GM12878 (cell line): ENCODE measurements at regions of chr14 and their contacts with region 1.

Region 1: DNA sequence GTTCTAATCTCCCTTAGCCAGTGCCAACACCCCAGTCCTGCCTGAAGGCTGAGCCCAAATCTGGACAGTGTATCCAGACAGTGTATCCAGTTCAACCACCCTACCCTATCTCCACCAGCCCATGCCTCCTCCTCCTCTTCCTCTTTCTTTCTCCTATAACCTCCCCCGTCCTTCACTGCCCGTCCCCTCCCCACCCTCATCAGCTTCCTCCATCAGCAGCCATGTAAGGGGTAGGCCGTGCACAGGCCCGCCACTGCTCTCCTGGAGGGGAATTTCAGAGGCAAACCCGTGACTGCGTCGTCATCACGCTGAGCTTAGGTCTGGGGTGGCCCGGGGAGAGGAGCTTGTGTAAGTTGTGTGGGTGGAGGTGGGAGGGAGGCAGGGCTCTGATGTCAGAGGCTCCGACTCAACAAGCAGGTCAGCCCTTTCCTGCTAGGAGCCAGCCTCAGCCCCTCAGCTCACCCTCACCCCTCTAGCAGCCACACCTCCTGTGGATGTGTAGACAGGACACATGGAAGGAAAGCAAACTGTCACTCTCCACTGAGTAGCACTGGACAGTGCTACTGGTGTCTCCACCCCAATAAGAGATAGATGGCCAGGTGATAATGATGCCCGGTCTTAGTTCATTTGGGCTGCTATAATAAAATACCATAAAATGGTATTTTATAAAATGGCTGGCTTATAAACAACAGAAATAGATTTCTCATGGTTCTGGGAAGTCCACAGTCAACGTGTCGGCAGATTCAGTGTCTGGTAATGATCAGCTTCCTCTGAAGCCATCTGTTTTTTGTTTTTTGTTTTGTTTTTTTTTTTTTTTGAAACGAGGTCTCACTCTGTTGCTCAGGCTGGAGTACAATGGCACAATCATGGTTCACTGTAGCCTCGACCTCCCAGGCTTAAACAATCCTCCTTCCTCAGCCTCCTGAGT is 50.5 kb downstream of the IRF2BPL start:
- DNase-seq: peak; percentile 81
- ATAC-seq: peak; percentile 98
- H3K4me3 ChIP-seq: no peak overlapping the region
- H3K27ac ChIP-seq: peak overlapping the region; percentile 65
- H3K4me1 ChIP-seq: peaks cover 20% of the 10 kb centered on the region
- H3K27me3 ChIP-seq: no peaks in the 10 kb centered on the region
- CTCF ChIP-seq: no peak
- EP300 ChIP-seq: peak; percentile 64 to 75; a peak in 2 of 4 replicates
- POLR2A ChIP-seq: peak; percentile 72
- RAD21 ChIP-seq: 0 out of 2 replicates have a peak, but pooled peaks have one; percentile 20

Region 2: DNA sequence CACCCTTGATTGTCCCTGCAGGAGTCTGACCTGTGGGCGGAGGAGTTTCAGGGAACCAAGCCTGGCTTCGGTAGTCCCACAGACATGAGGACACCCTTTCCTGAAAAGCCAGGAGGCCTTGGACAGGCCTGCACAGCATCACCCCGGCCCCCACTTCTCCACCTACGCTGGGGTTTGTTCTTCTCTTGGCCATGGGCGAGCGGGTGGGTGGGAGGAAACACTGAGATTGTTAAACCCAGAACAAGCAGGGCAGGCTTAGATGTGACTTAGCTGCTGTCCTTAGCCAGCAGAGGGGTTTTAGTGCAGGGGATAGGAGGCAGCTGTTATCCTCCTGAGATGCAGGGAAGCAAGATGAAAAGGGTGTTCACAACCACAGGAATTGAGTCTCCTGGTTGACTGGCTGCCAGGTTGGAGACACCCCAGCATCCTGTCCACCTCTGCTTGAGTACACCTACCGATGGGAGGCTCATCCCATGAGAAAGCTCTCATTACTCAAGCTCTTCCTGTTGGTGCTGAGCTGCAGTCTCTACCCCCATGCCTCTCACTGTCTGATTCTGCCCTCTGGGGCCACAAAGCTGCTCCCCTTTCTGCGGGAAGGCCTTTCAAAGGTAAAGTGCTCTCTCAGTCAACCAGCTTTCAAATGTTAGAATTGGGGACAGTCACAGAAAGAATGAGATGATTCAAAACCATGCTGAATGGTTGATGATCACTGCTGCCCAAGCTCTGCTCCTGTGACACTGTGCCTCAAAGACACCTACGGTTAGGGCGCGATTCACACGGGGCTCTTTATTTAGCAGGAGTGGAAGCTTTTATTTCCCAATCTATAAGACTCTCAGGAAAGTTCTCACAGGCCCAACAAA is 35.9 kb before region 1 on chr14:
- CTCF ChIA-PET with region 1: interaction called, 4 read pairs
- POLR2A ChIA-PET with region 1: interaction called, 10 read pairs
- RAD21 ChIA-PET with region 1: interaction called, 10 read pairs
- SMC1A ChIA-PET with region 1: interaction called, 7 read pairs
- in situ Hi-C with region 1: no loop called
- intact Hi-C with region 1: no loop called
- DNase-seq: peak; percentile 72
- ATAC-seq: peak; percentile 29
- H3K4me3 ChIP-seq: no peak overlapping the region
- H3K27ac ChIP-seq: no peak overlapping the region
- H3K4me1 ChIP-seq: peaks cover 21% of the 10 kb centered on the region
- H3K27me3 ChIP-seq: no peaks in the 10 kb centered on the region
- CTCF ChIP-seq: no peak; a peak in 1 of 6 replicates
- EP300 ChIP-seq: no peak
- POLR2A ChIP-seq: no peak
- RAD21 ChIP-seq: no peak

Region 3: GRCh38 chr14:76947078-76947837 is 30.8 kb before region 1 on chr14:
- CTCF ChIA-PET with region 1: interaction called, 4 read pairs
- POLR2A ChIA-PET with region 1: interaction called, 10 read pairs
- RAD21 ChIA-PET with region 1: interaction called, 10 read pairs
- SMC1A ChIA-PET with region 1: interaction called, 7 read pairs
- in situ Hi-C with region 1: no loop called
- intact Hi-C with region 1: no loop called
- DNase-seq: peak; percentile 67
- ATAC-seq: peak; percentile 87
- H3K4me3 ChIP-seq: no peak overlapping the region
- H3K27ac ChIP-seq: peak overlapping the region; percentile 64
- H3K4me1 ChIP-seq: peaks cover 29% of the 10 kb centered on the region
- H3K27me3 ChIP-seq: no peaks in the 10 kb centered on the region
- CTCF ChIP-seq: peak; percentile 45 to 72 (median 58)
- EP300 ChIP-seq: peak in 1 of 2 experiments; percentile 65; a peak in 2 of 4 replicates
- POLR2A ChIP-seq: no peak
- RAD21 ChIP-seq: peak; percentile 72

Region 4: GRCh38 chr14:76956316-76957090 is 21.6 kb before region 1 on chr14:
- CTCF ChIA-PET with region 1: interaction called, 22 read pairs
- POLR2A ChIA-PET with region 1: interaction called, 36 read pairs
- RAD21 ChIA-PET with region 1: interaction called, 71 read pairs
- SMC1A ChIA-PET with region 1: interaction called, 38 read pairs
- in situ Hi-C with region 1: no loop called
- intact Hi-C with region 1: no loop called
- DNase-seq: no peak
- ATAC-seq: peak; percentile 49
- H3K4me3 ChIP-seq: peak overlapping the region; percentile 68
- H3K27ac ChIP-seq: peak overlapping the region; percentile 100
- H3K4me1 ChIP-seq: peaks cover 73% of the 10 kb centered on the region
- H3K27me3 ChIP-seq: no peaks in the 10 kb centered on the region
- CTCF ChIP-seq: no peak
- EP300 ChIP-seq: peak; percentile 18 to 69; a peak in 2 of 4 replicates
- POLR2A ChIP-seq: peak; percentile 62
- RAD21 ChIP-seq: no peak

Region 5: DNA sequence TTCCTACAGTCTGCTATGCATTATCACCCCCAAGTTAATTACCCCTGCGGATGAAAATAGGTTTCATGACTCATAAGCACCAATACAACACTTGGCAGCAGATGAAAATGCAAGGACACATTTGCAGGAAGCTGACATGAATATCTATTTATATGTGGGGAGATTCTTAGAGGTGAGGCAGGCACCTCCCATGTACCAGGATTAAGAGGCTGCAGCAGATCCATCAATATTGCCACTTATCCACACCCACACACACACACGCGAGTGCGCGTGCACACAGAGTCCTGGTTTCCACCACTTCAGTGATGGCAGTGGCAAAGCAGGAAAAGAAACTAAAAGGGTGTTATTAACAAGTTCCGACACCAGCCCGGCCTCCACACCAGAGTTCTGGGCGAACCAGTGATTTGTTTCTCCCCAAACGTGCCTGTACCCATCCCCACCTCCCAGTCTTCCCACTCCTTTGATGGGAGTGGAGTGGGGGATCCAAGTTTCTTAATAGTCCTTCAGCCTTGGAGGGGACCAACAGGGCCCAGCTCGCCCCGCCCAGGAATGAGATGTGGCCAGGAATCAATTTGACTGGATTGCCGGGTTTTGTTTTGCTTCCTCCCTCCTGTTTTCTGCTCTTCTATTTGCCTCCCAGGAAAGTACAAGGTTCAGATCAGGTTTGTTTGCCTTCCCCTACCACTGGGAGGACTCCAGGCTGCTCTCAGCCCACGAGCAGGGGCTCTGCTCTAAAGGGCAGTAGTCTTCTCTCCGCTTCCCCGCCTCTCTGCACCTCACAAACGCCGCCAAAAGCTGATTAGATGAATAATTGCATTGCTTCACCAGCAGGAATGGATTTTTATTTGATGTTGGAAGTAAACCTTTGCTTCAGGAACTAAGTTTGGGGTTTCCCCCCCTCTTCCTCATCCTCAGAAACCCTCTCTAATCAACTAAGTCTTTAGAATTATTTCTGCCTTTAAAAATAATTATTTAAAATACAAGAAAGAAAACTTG is 45.2 kb after region 1 on chr14:
- CTCF ChIA-PET with region 1: interaction called, 4 read pairs
- POLR2A ChIA-PET with region 1: interaction called, 27 read pairs
- RAD21 ChIA-PET with region 1: interaction called, 34 read pairs
- SMC1A ChIA-PET with region 1: interaction called, 17 read pairs
- in situ Hi-C with region 1: no loop called
- intact Hi-C with region 1: no loop called
- DNase-seq: no peak
- ATAC-seq: peak; percentile 7
- H3K4me3 ChIP-seq: no peak overlapping the region
- H3K27ac ChIP-seq: peak overlapping the region; percentile 56
- H3K4me1 ChIP-seq: peaks cover 51% of the 10 kb centered on the region
- H3K27me3 ChIP-seq: no peaks in the 10 kb centered on the region
- CTCF ChIP-seq: 0 out of 6 replicates have a peak, but pooled peaks of 2 of the 3 experiments have one; percentile 2 to 14
- EP300 ChIP-seq: no peak
- POLR2A ChIP-seq: no peak
- RAD21 ChIP-seq: no peak

Region 6: GRCh38 chr14:77033622-77034521 is 55.8 kb after region 1 on chr14:
- CTCF ChIA-PET with region 1: interaction called, 3 read pairs
- POLR2A ChIA-PET with region 1: interaction called, 26 read pairs
- RAD21 ChIA-PET with region 1: interaction called, 25 read pairs
- SMC1A ChIA-PET with region 1: interaction called, 17 read pairs
- in situ Hi-C with region 1: no loop called
- intact Hi-C with region 1: no loop called
- DNase-seq: peak; percentile 72
- ATAC-seq: peak; percentile 86
- H3K4me3 ChIP-seq: peak overlapping the region; percentile 78
- H3K27ac ChIP-seq: peak overlapping the region; percentile 99
- H3K4me1 ChIP-seq: peaks cover 61% of the 10 kb centered on the region
- H3K27me3 ChIP-seq: no peaks in the 10 kb centered on the region
- CTCF ChIP-seq: no peak
- EP300 ChIP-seq: peak in 1 of 2 experiments; percentile 47; a peak in 3 of 4 replicates
- POLR2A ChIP-seq: peak; percentile 85
- RAD21 ChIP-seq: no peak

Region 7: GRCh38 chr14:77040059-77040740 is 62.1 kb after region 1 on chr14:
- CTCF ChIA-PET with region 1: interaction called, 5 read pairs
- POLR2A ChIA-PET with region 1: interaction called, 26 read pairs
- RAD21 ChIA-PET with region 1: interaction called, 29 read pairs
- SMC1A ChIA-PET with region 1: interaction called, 8 read pairs
- in situ Hi-C with region 1: no loop called
- intact Hi-C with region 1: no loop called
- DNase-seq: peak; percentile 99
- ATAC-seq: peak; percentile 75
- H3K4me3 ChIP-seq: peak overlapping the region; percentile 50
- H3K27ac ChIP-seq: peak overlapping the region; percentile 93
- H3K4me1 ChIP-seq: peaks cover 87% of the 10 kb centered on the region
- H3K27me3 ChIP-seq: no peaks in the 10 kb centered on the region
- CTCF ChIP-seq: no peak
- EP300 ChIP-seq: peak; percentile 42 to 61
- POLR2A ChIP-seq: peak; percentile 55; the same call in 1 of the 2 replicates
- RAD21 ChIP-seq: no peak

Region 8: DNA sequence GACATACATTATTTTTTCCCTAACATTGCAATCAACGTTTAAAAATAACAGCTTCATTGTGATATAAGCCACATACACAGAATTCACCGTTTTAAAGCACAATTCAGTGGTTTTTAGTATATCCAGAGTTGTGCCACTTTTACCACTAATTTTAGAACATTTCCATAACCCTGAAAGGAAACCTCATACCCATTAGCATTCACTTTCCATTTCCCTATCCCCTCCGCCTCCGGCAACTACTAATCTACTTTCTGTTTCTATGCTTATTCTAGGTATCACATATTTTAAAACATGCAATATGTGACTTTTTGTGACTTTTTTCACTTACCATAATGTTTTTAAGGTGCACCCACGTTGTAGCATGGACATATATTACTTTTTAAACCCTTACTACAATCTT is 576.1 kb after region 1 on chr14:
- CTCF ChIA-PET with region 1: no interaction called
- POLR2A ChIA-PET with region 1: no interaction called
- RAD21 ChIA-PET with region 1: no interaction called
- SMC1A ChIA-PET with region 1: no interaction called
- in situ Hi-C with region 1: no loop called
- intact Hi-C with region 1: no loop called
- DNase-seq: peak; percentile 37
- ATAC-seq: peak; percentile 83
- H3K4me3 ChIP-seq: no peak overlapping the region
- H3K27ac ChIP-seq: peak overlapping the region; percentile 87
- H3K4me1 ChIP-seq: peaks cover 16% of the 10 kb centered on the region
- H3K27me3 ChIP-seq: no peaks in the 10 kb centered on the region
- CTCF ChIP-seq: no peak
- EP300 ChIP-seq: no peak
- POLR2A ChIP-seq: no peak
- RAD21 ChIP-seq: no peak